GM12878 (cell line): ENCODE measurements at regions of chr12 and their contacts with region 1.

Region 1: GRCh38 chr12:62720661-62721330 is 214.2 kb downstream of the PPM1H start:
- DNase-seq: no peak
- ATAC-seq: no peak
- H3K4me3 ChIP-seq: no peak overlapping the region
- H3K27ac ChIP-seq: no peak overlapping the region
- H3K4me1 ChIP-seq: no peaks in the 10 kb centered on the region
- H3K27me3 ChIP-seq: no peaks in the 10 kb centered on the region
- CTCF ChIP-seq: no peak
- EP300 ChIP-seq: no peak
- POLR2A ChIP-seq: no peak
- RAD21 ChIP-seq: no peak

Region 2: DNA sequence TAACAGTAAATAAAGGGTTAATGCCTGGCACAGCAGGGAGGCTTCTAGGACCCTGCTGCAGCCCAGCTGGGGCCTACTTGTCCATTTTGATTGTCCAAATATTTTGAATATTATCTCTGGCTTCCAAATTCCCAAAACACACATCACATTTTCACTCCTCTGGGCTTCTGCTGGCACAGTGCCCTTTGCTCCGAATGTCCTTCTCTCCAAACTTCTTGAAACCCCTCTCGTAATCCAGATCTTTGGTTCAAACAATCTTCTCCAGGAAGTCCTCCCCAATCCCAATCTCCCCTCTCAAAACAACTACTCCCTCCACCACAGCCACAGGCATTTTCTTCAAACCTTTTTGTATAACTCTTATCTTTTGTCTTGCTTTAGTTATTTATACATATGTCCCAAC is 11.5 kb before region 1 on chr12:
- CTCF ChIA-PET with region 1: interaction called, 3 read pairs
- POLR2A ChIA-PET with region 1: no interaction called
- RAD21 ChIA-PET with region 1: no interaction called
- SMC1A ChIA-PET with region 1: interaction called, 11 read pairs
- in situ Hi-C with region 1: no loop called
- intact Hi-C with region 1: no loop called
- DNase-seq: no peak
- ATAC-seq: no peak
- H3K4me3 ChIP-seq: no peak overlapping the region
- H3K27ac ChIP-seq: no peak overlapping the region
- H3K4me1 ChIP-seq: no peaks in the 10 kb centered on the region
- H3K27me3 ChIP-seq: no peaks in the 10 kb centered on the region
- CTCF ChIP-seq: no peak
- EP300 ChIP-seq: no peak
- POLR2A ChIP-seq: no peak
- RAD21 ChIP-seq: no peak

Region 3: DNA sequence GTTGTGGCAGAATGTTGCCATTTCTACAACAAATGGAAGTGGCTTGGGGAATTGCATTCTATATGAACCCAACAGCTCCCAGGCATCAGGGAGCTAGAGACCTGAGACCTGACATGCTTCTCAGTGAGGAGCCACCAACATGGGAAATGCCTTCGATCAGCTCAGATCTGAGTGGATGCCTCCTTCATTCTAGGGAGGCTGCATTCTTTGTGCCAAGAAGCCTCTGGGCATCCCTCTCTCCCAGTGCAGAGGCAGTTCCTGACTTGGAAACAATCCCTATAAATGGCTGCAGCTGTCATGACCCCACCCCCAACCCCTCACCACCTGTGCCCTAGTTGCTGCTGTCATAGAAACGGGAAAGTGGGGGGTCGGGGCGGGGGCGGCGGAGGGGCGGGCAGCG is 17.8 kb after region 1 on chr12:
- CTCF ChIA-PET with region 1: no interaction called
- POLR2A ChIA-PET with region 1: no interaction called
- RAD21 ChIA-PET with region 1: no interaction called
- SMC1A ChIA-PET with region 1: no interaction called
- in situ Hi-C with region 1: no loop called
- intact Hi-C with region 1: no loop called
- DNase-seq: no peak
- ATAC-seq: no peak
- H3K4me3 ChIP-seq: no peak overlapping the region
- H3K27ac ChIP-seq: no peak overlapping the region
- H3K4me1 ChIP-seq: no peaks in the 10 kb centered on the region
- H3K27me3 ChIP-seq: no peaks in the 10 kb centered on the region
- CTCF ChIP-seq: no peak
- EP300 ChIP-seq: no peak
- POLR2A ChIP-seq: no peak
- RAD21 ChIP-seq: no peak

Region 4: DNA sequence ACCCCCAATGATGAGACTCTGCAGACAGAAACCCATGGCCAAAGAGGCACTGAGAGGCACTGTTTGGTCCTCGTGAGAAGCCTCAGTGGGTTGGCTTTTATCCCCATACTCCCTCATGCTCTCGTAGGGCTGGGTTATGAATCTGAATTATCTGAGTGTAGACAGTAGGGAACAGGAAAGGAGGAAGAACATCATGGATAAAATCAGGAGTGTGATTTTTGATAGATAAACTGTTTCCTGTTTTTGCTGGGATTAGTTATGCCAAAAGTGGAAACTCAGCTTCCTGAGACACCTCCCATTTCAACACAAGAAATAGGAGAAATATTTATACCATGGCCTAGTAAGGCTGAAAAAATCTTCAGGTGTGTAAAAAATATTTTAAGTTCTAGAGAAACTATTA is 36.3 kb after region 1 on chr12:
- CTCF ChIA-PET with region 1: no interaction called
- POLR2A ChIA-PET with region 1: no interaction called
- RAD21 ChIA-PET with region 1: no interaction called
- SMC1A ChIA-PET with region 1: no interaction called
- in situ Hi-C with region 1: no loop called
- intact Hi-C with region 1: no loop called
- DNase-seq: no peak
- ATAC-seq: no peak
- H3K4me3 ChIP-seq: no peak overlapping the region
- H3K27ac ChIP-seq: no peak overlapping the region
- H3K4me1 ChIP-seq: peaks cover 4% of the 10 kb centered on the region
- H3K27me3 ChIP-seq: no peaks in the 10 kb centered on the region; a peak in 2 of 4 replicates
- CTCF ChIP-seq: no peak
- EP300 ChIP-seq: no peak
- POLR2A ChIP-seq: no peak
- RAD21 ChIP-seq: no peak

Region 5: DNA sequence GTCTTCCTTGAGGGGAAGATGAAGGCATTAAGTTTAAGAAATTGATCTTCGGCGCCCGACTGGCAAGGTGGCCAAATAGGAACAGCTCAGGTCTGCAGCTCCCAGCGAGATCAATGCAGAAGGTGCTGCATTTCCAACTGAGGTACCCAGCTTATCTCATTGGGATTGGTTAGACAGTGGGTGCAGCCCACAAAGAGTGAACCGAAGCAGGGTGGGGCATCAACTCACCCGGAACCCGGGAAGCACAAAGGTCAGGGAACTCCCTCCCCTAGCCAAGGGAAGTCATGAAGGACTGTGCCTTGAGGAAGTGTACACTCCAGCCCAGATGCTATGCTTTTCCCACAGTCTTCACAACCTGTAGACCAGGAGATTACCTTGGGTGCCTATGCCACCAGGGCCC is 475.4 kb after region 1 on chr12:
- CTCF ChIA-PET with region 1: no interaction called
- POLR2A ChIA-PET with region 1: no interaction called
- RAD21 ChIA-PET with region 1: no interaction called
- SMC1A ChIA-PET with region 1: no interaction called
- in situ Hi-C with region 1: no loop called
- intact Hi-C with region 1: no loop called
- DNase-seq: no peak
- ATAC-seq: no peak
- H3K4me3 ChIP-seq: no peak overlapping the region
- H3K27ac ChIP-seq: no peak overlapping the region
- H3K4me1 ChIP-seq: no peaks in the 10 kb centered on the region
- H3K27me3 ChIP-seq: no peaks in the 10 kb centered on the region
- CTCF ChIP-seq: no peak
- EP300 ChIP-seq: no peak
- POLR2A ChIP-seq: no peak
- RAD21 ChIP-seq: no peak